GM18951 (cell line): ENCODE measurements at regions of chr12 and their contacts with region 1.

Region 1: DNA sequence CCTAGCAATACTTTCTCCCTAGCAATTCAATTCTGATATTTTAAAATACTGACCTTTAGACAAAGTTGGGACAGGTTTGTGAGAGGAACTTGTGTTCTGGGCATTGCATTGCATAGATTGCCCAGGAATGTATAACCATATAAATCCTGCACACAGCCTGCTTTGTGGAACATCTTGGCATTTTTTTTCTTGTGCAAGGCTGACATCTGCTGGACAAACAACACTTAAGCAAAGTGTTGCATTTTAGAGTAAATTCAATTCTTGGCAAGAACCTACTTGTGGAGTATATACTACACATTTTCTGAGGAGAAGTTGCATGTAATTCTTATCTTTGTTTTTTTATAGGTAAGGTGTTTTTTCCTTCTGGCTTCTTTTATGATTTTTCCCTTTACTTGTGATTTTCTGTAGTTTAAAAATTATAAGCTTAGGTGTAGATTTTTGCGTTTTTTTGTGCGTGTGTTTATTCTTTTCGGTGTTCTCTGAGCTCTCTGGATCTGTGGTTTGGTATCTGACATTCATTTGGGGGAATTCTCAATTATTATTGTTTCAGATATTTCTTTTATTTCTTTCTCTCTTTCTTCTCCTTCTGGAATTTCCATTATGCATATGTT is 26.4 kb downstream of the TESPA1 start:
- POLR2A ChIP-seq: no peak

Region 2: GRCh38 chr12:54749191-54749818 is 208.8 kb before region 1 on chr12:
- in situ Hi-C with region 1: loop called (anchors 10 kb)
- POLR2A ChIP-seq: no peak

Region 3: DNA sequence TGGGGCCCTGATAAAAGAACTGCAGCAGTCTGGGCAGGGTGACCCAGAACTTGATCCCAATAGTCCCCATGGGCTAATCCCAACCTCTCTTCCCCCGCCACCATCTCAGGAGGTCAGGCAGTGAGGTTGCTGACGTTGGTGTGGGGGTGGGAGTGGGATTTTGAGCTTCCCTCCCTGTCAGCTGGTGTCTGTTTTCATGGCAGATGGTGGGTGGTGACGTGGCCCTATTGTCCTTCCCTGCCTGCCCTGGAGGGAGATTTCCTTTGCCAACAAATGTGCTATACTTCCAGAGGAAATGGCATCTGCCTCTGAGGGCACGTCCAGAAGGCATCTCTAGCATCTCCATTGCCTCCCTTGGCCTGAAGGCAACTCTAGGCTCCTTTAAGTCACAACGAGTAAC is 99.3 kb after region 1 on chr12:
- in situ Hi-C with region 1: no loop called
- POLR2A ChIP-seq: no peak